ENCODE measurements at regions of chr2 and their contacts with region 1.

Region 1: DNA sequence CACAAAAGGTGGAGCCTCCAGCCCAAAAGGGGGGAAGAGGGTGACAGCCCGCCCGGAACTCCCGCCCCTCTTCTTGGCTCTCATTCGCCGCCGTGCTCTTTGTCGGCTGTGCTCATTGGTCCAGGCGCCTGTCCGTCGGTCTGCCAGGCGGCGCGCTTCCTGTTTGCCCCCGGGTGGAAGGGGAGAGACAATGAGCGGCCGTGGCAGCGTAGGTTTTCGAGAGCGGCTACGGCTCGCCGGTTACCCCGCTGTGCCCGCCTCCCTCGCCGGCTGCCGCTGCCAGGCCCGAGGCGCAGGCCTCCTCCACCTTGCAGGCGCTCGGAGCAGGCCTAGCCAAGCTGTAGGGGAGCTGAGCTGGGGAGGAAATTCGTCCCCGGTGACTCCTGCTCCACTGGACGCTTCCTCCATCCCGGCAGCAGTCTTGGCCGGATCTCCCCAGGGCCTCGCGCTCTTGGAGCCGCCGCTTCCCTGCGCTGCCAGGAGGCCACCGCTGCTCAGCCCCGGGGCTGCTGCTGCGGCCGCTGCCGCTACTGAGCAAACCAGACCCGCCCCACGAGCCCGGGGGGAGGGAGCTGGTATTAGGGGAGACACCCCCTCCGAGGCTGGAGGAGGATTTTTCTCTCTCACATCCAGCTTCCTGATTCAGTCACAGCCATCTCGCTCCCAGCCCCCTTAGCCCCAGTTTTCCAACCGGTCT is at the start of gene SP3:
- DNase-seq: peak; percentile 98
- ATAC-seq: peak; percentile 80
- H3K4me3 Mint-ChIP-seq: peak within 1 kb of the TSS; percentile 79
- H3K27ac Mint-ChIP-seq: peak within 1 kb of the TSS; percentile 100
- H3K4me1 Mint-ChIP-seq: peaks cover 27% of the 10 kb centered on the region
- H3K27me3 Mint-ChIP-seq: no peaks in the 10 kb centered on the region
- total RNA-seq, gene SP3: 83.8 to 91.4 TPM

Region 2: GRCh38 chr2:172555522-172556283 is 1409.8 kb before region 1 on chr2 and contains the start of gene PDK1:
- CTCF ChIA-PET with region 1: no interaction called
- POLR2A ChIA-PET with region 1: no interaction called
- intact Hi-C with region 1: loop called in 1 of 2 experiments (anchors 2 kb)
- DNase-seq: peak; percentile 96
- ATAC-seq: peak; percentile 89
- H3K4me3 Mint-ChIP-seq: peak within 1 kb of the TSS; percentile 88
- H3K27ac Mint-ChIP-seq: peak within 1 kb of the TSS; percentile 95
- H3K4me1 Mint-ChIP-seq: peaks cover 57% of the 10 kb centered on the region
- H3K27me3 Mint-ChIP-seq: peaks cover 6% of the 10 kb centered on the region
- total RNA-seq, gene PDK1: 56.8 to 85.5 TPM

Region 3: DNA sequence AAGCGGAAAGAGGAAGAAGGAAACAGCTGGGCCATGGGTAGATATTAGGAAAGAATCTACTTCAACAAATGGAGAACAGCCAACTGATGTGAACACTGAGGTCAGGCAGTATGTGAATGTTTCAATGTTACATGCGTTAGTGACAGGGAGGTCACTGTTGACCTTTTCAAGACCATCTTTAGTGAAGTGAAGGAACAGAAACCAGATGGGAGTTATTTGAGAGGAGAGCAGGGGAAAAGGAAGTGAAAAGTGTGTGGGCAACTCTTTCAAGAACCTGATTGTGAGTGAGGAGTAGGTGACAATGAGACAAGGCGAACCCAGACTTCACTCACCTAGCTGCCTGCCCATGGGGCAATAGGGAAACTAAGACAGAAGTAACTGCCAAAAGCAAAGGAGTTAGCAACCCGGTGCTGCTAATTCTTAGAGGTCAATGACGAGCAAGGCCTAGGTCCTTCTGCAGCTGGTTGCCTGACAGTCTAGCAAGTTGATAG is 67.3 kb before region 1 on chr2:
- CTCF ChIA-PET with region 1: no interaction called
- POLR2A ChIA-PET with region 1: no interaction called
- intact Hi-C with region 1: loop called in 1 of 2 experiments (anchors 2 kb)
- DNase-seq: peak; percentile 18
- ATAC-seq: peak; percentile 21
- H3K4me3 Mint-ChIP-seq: no peak overlapping the region
- H3K27ac Mint-ChIP-seq: peak overlapping the region; percentile 14
- H3K4me1 Mint-ChIP-seq: peaks cover 24% of the 10 kb centered on the region
- H3K27me3 Mint-ChIP-seq: no peaks in the 10 kb centered on the region

Region 4: DNA sequence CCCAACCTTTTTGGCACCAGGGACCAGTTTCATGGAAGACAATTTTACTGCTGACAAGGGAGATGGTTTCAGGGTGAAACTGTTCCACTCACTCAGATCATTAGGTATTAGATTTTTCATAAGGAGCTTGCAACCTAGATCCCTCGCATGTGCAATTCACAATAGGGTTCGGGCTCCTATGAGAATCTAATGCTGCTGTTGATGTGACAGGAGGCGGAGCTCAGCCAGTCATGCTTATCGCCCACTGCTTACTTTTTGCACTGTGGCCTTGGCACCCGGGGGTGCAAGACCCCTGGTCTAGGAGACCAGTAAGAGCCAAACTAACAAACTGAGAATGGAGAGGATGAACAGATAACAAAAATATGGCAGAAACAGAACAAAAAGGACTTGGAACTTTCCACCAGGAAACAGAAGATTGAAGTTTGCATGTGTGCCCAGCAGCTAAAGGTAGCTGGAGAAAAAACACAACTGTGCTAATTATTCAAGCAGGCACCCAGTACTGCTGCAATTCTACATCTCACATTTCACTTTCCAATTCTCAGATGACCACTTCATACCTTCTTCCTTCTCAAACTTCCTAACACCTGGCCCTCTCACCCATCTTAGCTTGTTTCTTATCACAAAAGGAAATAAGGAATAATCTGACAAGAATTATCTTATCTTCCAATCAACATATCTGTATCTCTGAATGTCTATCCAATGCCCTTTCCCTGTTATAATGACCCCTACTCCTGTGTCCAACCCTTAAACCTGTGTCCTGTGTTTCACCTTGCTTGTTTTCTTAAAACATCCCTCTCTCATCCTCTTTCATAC is 25.1 kb before region 1 on chr2:
- CTCF ChIA-PET with region 1: interaction called, 8 read pairs
- POLR2A ChIA-PET with region 1: no interaction called
- intact Hi-C with region 1: loop called (anchors 1 to 2 kb)
- DNase-seq: no peak
- ATAC-seq: no peak
- H3K4me3 Mint-ChIP-seq: no peak overlapping the region
- H3K27ac Mint-ChIP-seq: peak overlapping the region; percentile 66
- H3K4me1 Mint-ChIP-seq: peaks cover 70% of the 10 kb centered on the region
- H3K27me3 Mint-ChIP-seq: no peaks in the 10 kb centered on the region

Region 5: GRCh38 chr2:174023591-174024523 is 58.4 kb after region 1 on chr2:
- CTCF ChIA-PET with region 1: no interaction called
- POLR2A ChIA-PET with region 1: no interaction called
- intact Hi-C with region 1: loop called in 1 of 2 experiments (anchors 5 kb)
- DNase-seq: peak; percentile 71
- ATAC-seq: peak; percentile 86
- H3K4me3 Mint-ChIP-seq: no peak overlapping the region
- H3K27ac Mint-ChIP-seq: peak overlapping the region; percentile 5
- H3K4me1 Mint-ChIP-seq: peaks cover 16% of the 10 kb centered on the region
- H3K27me3 Mint-ChIP-seq: no peaks in the 10 kb centered on the region

Region 6: GRCh38 chr2:174248187-174248997 is 282.9 kb after region 1 on chr2 and contains the start of gene OLA1:
- CTCF ChIA-PET with region 1: no interaction called
- POLR2A ChIA-PET with region 1: no interaction called
- intact Hi-C with region 1: loop called (anchors 1 to 10 kb)
- DNase-seq: peak; percentile 98
- ATAC-seq: peak; percentile 97
- H3K4me3 Mint-ChIP-seq: peak within 1 kb of the TSS; percentile 90
- H3K27ac Mint-ChIP-seq: peak within 1 kb of the TSS; percentile 85
- H3K4me1 Mint-ChIP-seq: peaks cover 31% of the 10 kb centered on the region
- H3K27me3 Mint-ChIP-seq: no peaks in the 10 kb centered on the region
- total RNA-seq, gene OLA1: 136 to 157 TPM

Region 7: GRCh38 chr2:174487108-174487819 is 521.8 kb after region 1 on chr2:
- CTCF ChIA-PET with region 1: no interaction called
- POLR2A ChIA-PET with region 1: no interaction called
- intact Hi-C with region 1: loop called in 1 of 2 experiments (anchors 1 kb)
- DNase-seq: peak; percentile 100
- ATAC-seq: peak; percentile 94
- H3K4me3 Mint-ChIP-seq: peak overlapping the region; percentile 98
- H3K27ac Mint-ChIP-seq: peak overlapping the region; percentile 94
- H3K4me1 Mint-ChIP-seq: peaks cover 52% of the 10 kb centered on the region
- H3K27me3 Mint-ChIP-seq: no peaks in the 10 kb centered on the region